HEK293 (cell line): ENCODE measurements at regions of chr15 and their contacts with region 1.

Region 1: GRCh38 chr15:98881526-98882520 is 125.8 kb downstream of the PGPEP1L start:
- H3K4me3 ChIP-seq: no peak overlapping the region
- H3K27ac ChIP-seq: no peak overlapping the region
- H3K4me1 ChIP-seq: peaks cover 9% of the 10 kb centered on the region
- CTCF ChIP-seq: 0 out of 2 replicates have a peak, but pooled peaks have one; percentile 27

Region 2: GRCh38 chr15:98779463-98780071 is 102.3 kb before region 1 on chr15:
- CTCF ChIA-PET with region 1: interaction called, 30 read pairs
- POLR2A ChIA-PET with region 1: no interaction called
- H3K4me3 ChIP-seq: no peak overlapping the region
- H3K27ac ChIP-seq: no peak overlapping the region
- H3K4me1 ChIP-seq: peaks cover 24% of the 10 kb centered on the region
- CTCF ChIP-seq: peak; percentile 90

Region 3: DNA sequence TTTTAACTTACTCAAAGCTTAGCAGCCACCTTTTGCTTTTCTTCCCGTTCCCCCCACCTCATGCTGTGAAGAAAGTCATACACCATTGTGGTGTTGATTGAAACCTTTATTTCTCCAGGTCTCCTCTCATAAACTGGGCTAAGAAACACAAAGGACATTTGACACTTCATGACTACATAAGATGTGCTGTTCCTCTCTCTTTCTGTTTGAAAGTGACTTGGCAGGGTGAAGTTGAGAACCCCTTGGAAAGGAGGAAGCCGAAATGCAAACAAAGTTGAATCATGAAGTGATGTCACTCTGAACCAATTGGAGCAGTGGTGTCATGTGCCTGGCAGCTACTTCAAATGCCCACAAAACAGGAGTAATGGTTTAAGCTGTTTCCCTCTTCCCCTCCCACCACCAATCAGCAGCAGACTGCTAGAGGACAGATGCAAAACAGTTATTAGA is 58.8 kb before region 1 on chr15:
- CTCF ChIA-PET with region 1: no interaction called
- POLR2A ChIA-PET with region 1: no interaction called
- H3K4me3 ChIP-seq: no peak overlapping the region; the same call in 1 of the 2 replicates
- H3K27ac ChIP-seq: peak overlapping the region; percentile 61
- H3K4me1 ChIP-seq: peaks cover 19% of the 10 kb centered on the region
- CTCF ChIP-seq: no peak

Region 4: DNA sequence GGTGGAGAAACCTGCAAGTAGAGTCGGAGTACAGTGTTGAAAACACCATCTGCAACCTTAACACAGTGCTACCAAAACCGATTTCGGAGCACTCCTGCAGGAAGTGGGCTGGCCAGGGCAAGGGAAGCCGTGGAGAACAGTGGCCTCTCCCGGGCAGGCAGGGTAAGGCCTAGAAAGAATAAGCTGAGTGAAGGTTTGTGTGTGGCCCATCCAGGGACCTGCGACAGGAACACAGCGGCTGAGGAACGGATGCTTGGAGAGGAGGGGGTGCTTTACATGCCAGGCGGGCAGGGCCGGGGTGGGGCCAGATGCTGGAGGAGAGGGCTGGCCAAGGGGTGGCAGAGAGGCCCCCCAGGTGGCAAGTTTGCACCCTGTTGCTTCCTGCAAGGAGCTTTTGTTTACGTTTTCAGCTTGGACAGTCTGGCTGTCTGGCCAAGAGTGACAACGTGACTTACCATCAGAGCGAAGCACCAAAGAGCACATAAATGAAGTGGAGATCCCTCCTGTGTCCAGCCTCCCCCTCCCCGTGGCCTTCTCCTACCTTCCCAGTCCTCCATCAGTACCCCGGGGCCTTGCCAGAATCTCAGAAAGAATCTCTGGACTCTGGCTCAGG is 30.8 kb before region 1 on chr15:
- CTCF ChIA-PET with region 1: interaction called, 19 read pairs
- POLR2A ChIA-PET with region 1: no interaction called
- H3K4me3 ChIP-seq: no peak overlapping the region
- H3K27ac ChIP-seq: peak overlapping the region; percentile 0; the same call in 1 of the 2 replicates
- H3K4me1 ChIP-seq: peaks cover 37% of the 10 kb centered on the region
- CTCF ChIP-seq: peak; percentile 89

Region 5: DNA sequence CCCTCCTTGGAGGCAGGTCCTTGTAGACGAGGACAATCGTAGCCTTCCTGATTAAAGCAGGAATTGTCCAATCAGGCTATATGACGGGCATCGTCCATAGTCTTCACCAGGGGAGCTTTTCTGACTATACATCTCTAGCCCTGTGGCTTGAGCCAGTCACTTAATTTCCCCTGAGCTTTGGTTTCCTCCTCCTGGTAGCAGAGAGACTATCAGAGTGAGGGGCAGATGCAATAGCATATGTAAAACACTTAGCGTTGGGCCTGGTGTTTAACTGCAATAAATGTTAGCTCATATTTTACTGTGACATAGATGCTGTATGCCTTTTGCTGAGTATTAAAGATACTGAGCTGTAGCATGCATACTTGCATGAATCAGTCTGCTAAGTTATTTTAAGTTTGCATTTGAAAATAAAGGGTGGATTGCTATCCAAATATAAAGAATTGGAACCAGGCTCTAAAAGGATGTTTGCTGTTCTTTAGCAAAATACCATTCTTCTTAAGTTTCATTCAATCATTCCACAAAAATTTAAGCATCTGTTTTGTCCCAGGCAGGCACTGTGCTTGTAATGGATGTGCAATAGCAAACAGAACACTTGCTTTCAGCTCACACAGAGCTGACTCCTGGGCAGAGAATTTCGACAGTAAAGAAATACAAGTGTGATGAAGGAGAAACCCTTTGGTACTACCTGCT is 25.5 kb before region 1 on chr15:
- CTCF ChIA-PET with region 1: interaction called, 19 read pairs
- POLR2A ChIA-PET with region 1: no interaction called
- H3K4me3 ChIP-seq: no peak overlapping the region
- H3K27ac ChIP-seq: no peak overlapping the region
- H3K4me1 ChIP-seq: peaks cover 52% of the 10 kb centered on the region
- CTCF ChIP-seq: no peak

Region 6: DNA sequence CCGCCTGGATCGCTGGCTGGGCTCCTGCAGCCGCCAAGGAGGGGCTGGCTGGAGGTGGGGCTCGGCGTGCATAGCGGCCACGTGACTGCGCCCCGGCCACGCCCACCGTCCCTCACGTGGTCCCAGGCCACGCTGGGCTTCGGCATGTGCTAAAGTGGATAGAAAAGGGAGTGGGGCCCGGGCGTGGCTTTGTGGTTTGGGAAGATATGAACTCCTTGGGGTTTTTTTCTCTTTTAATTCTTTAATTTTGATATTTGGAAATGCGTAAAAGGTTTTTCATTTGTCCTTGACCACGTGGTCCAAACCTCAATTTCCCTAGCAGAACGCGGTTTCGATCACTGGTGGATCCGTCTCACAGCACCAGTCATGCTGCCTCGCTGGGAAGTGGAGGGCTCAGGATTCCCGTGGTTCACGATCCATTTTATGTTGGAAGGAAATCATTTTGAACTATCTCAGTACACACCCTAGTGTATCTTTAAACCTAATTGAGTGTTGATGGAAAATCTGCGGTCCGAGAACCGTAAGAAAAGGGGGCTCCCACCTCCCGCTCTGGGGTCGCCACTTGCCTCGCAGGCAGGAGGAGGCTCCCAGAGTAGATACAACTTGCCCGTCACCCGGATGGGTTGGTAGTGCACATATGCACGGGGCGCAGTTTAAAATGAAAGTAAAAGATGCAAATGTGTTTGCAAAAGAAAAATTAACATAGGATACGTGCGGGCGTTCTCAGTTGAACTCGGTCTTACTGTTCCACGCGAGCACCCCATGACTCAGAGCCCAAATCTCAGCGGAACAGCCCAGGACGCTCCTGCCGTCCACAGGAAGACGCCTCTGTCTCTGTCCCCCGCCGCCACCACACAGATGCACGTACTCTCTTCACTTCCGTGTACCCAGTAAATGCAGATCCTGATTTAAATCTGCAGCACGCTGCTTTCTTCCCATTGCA is 16.2 kb before region 1 on chr15:
- CTCF ChIA-PET with region 1: interaction called, 15 read pairs
- POLR2A ChIA-PET with region 1: no interaction called
- H3K4me3 ChIP-seq: peak overlapping the region; percentile 42
- H3K27ac ChIP-seq: peak overlapping the region; percentile 27; the same call in 1 of the 2 replicates
- H3K4me1 ChIP-seq: peaks cover 19% of the 10 kb centered on the region
- CTCF ChIP-seq: no peak

Region 7: DNA sequence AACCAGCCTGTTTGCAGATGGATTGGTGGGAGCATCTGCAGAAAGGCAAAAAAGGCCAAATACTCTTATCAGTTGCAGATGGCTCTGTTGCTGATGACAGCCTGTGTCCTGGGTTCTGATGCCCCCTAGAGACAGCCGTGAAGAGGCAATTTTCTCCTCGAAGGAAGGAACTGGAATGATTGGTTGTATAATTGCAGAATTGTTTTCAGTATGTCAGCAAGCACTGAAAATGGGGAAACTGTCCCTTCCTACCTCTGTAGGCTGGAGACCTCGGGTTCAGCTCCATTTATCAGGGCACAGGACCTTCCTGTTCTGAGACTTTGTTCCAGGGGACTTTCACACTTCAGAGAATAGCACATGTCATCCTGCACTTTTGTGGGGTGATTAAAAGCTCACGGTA is 22.7 kb after region 1 on chr15:
- CTCF ChIA-PET with region 1: interaction called, 27 read pairs
- POLR2A ChIA-PET with region 1: no interaction called
- H3K4me3 ChIP-seq: no peak overlapping the region
- H3K27ac ChIP-seq: no peak overlapping the region
- H3K4me1 ChIP-seq: no peaks in the 10 kb centered on the region
- CTCF ChIP-seq: peak; percentile 63; the same call in 1 of the 2 replicates

Region 8: GRCh38 chr15:99076552-99077308 is 194.9 kb after region 1 on chr15:
- CTCF ChIA-PET with region 1: interaction called, 13 read pairs
- POLR2A ChIA-PET with region 1: no interaction called
- H3K4me3 ChIP-seq: peak overlapping the region; percentile 1; the same call in 1 of the 2 replicates
- H3K27ac ChIP-seq: no peak overlapping the region
- H3K4me1 ChIP-seq: no peaks in the 10 kb centered on the region
- CTCF ChIP-seq: peak; percentile 70; the same call in 1 of the 2 replicates